A549 (cell line): ENCODE measurements at regions of chr3 and their contacts with region 1.

Region 1: GRCh38 chr3:119240591-119241434 is at the start of gene B4GALT4:
- DNase-seq: peak; percentile 67 to 90
- ATAC-seq: peak; percentile 94 to 95
- H3K4me3 ChIP-seq: peak within 1 kb of the TSS; percentile 80
- H3K27ac ChIP-seq: peak within 1 kb of the TSS; percentile 92 to 99
- H3K4me1 ChIP-seq: peaks cover 33% of the 10 kb centered on the region
- CTCF ChIP-seq: no peak
- EP300 ChIP-seq: no peak; a peak in 1 of 5 replicates
- POLR2A ChIP-seq: peak; percentile 80
- RAD21 ChIP-seq: peak in 1 of 2 experiments; percentile 10; a peak in 1 of 5 replicates
- polyA plus RNA-seq, gene B4GALT4: 134 and 193 TPM in 2 replicates

Region 2: GRCh38 chr3:119034256-119035013 is 206.4 kb before region 1 on chr3 and contains the start of gene IGSF11:
- CTCF ChIA-PET with region 1: interaction called, 3 read pairs
- POLR2A ChIA-PET with region 1: interaction called, 18 read pairs
- DNase-seq: peak; percentile 75 to 82
- ATAC-seq: peak; percentile 93 to 97
- H3K4me3 ChIP-seq: peak within 1 kb of the TSS; percentile 73
- H3K27ac ChIP-seq: peak within 1 kb of the TSS; percentile 65 to 73
- H3K4me1 ChIP-seq: peaks cover 12% of the 10 kb centered on the region; the same call in 1 of the 3 replicates
- CTCF ChIP-seq: peak; percentile 83
- EP300 ChIP-seq: no peak
- POLR2A ChIP-seq: peak; percentile 56
- RAD21 ChIP-seq: peak; percentile 29 to 79; a peak in 4 of 5 replicates
- polyA plus RNA-seq, gene IGSF11: 21.7 and 22.2 TPM in 2 replicates

Region 3: GRCh38 chr3:119206611-119207511 is 34.0 kb before region 1 on chr3:
- CTCF ChIA-PET with region 1: interaction called, 13 read pairs
- POLR2A ChIA-PET with region 1: interaction called, 4 read pairs
- DNase-seq: peak; percentile 66 to 85
- ATAC-seq: peak; percentile 81 to 82
- H3K4me3 ChIP-seq: no peak overlapping the region
- H3K27ac ChIP-seq: peak overlapping the region; percentile 90 to 91
- H3K4me1 ChIP-seq: peaks cover 79% of the 10 kb centered on the region
- CTCF ChIP-seq: peak; percentile 29; the same call in 2 of the 3 replicates
- EP300 ChIP-seq: no peak
- POLR2A ChIP-seq: no peak
- RAD21 ChIP-seq: peak; percentile 49 to 60

Region 4: GRCh38 chr3:119257682-119258410 is 17.0 kb after region 1 on chr3:
- CTCF ChIA-PET with region 1: interaction called, 18 read pairs
- POLR2A ChIA-PET with region 1: no interaction called
- DNase-seq: peak in 1 of 2 experiments; percentile 63
- ATAC-seq: peak in 1 of 2 experiments; percentile 67; a peak in 1 of 6 replicates
- H3K4me3 ChIP-seq: no peak overlapping the region
- H3K27ac ChIP-seq: no peak overlapping the region
- H3K4me1 ChIP-seq: no peaks in the 10 kb centered on the region
- CTCF ChIP-seq: no peak
- EP300 ChIP-seq: no peak
- POLR2A ChIP-seq: no peak
- RAD21 ChIP-seq: no peak

Region 5: GRCh38 chr3:119681279-119681678 is 440.5 kb after region 1 on chr3:
- CTCF ChIA-PET with region 1: interaction called, 18 read pairs
- POLR2A ChIA-PET with region 1: interaction called, 3 read pairs
- DNase-seq: peak; percentile 27 to 44
- ATAC-seq: peak; percentile 47 to 54; a peak in 2 of 6 replicates
- H3K4me3 ChIP-seq: no peak overlapping the region
- H3K27ac ChIP-seq: no peak overlapping the region
- H3K4me1 ChIP-seq: peaks cover 5% of the 10 kb centered on the region; the same call in 2 of the 3 replicates
- CTCF ChIP-seq: peak; percentile 70
- EP300 ChIP-seq: no peak
- POLR2A ChIP-seq: no peak
- RAD21 ChIP-seq: peak; percentile 84 to 87